BJ (cell line): ENCODE measurements at regions of chr17 and their contacts with region 1.

Region 1: DNA sequence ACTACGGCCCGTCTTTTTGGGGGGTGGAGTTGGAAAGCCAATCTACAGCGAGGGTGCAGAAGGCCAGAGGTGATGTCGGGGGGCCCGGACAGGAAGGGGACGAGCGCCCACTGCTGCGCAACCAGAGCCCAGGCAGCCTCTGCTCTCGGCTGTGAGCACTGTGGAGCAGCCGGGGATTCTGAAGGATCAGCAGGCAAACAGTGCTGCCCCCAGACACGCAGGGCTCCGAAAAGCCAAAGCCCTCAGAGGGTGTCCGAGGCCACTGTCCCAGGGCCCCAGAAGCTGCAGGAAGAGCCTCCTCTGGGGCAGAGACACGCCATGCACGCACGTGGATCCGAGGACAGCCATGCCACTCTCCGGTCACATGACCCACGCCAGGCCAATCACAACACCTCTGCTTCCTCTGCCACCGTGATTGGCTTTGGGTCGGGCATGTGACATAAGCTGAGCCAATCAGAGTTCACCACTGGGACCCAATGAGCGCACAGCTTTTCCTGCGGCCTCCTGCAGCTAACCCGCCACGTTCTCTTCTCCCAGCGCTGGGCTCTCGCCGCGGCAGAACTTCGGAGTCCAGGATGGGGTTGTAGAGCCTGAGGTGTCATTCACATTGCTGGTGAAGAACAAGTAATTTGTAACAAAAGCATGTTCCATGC is 40.7 kb downstream of the ACTG1 start:
- DNase-seq: peak; percentile 76
- H3K4me3 ChIP-seq: peak overlapping the region; percentile 22
- H3K27me3 ChIP-seq: no peaks in the 10 kb centered on the region; the same call in 1 of the 2 replicates
- CTCF ChIP-seq: peak; percentile 77

Region 2: DNA sequence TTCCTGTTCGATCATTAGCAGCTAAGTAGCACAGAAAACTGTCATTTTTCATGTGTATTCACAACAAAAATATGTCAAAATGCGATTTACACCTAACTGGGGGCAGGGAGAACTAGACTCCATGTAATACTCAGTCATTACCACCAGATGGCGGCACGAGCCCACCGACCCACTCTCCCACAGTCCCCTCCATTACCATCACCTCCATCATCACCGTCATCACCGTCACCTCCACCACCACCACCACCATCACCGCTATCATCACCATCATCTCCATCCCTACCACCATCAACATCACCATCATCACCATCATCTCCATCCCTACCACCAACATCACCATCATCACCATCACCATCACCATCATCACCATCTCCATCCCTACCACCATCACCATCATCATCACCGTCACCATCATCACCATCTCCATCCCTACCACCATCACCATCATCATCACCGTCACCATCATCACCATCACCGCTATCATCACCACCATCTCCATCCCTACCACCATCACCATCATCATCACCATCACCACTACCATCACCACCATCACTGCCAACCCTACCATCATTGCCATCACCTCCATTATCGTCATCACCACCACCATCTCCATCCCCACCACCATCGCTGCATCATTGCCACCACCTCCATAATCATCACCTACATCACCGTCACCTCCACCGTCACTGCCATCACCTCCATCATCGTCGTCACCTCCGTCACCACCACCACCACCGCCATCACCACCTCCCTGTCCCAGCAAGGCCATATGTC is 218.4 kb before region 1 on chr17:
- CTCF ChIA-PET with region 1: interaction called, 10 read pairs
- POLR2A ChIA-PET with region 1: no interaction called
- DNase-seq: no peak
- H3K4me3 ChIP-seq: no peak overlapping the region
- H3K27me3 ChIP-seq: no peaks in the 10 kb centered on the region
- CTCF ChIP-seq: peak; percentile 73

Region 3: GRCh38 chr17:81394921-81395599 is 76.9 kb before region 1 on chr17 and contains the start of gene BAHCC1:
- CTCF ChIA-PET with region 1: interaction called, 11 read pairs
- POLR2A ChIA-PET with region 1: no interaction called
- DNase-seq: peak; percentile 97
- H3K4me3 ChIP-seq: peak within 1 kb of the TSS; percentile 61
- H3K27me3 ChIP-seq: no peaks in the 10 kb centered on the region
- CTCF ChIP-seq: no peak
- polyA plus RNA-seq, gene BAHCC1: 2.3 and 3.1 TPM in 2 replicates

Region 4: DNA sequence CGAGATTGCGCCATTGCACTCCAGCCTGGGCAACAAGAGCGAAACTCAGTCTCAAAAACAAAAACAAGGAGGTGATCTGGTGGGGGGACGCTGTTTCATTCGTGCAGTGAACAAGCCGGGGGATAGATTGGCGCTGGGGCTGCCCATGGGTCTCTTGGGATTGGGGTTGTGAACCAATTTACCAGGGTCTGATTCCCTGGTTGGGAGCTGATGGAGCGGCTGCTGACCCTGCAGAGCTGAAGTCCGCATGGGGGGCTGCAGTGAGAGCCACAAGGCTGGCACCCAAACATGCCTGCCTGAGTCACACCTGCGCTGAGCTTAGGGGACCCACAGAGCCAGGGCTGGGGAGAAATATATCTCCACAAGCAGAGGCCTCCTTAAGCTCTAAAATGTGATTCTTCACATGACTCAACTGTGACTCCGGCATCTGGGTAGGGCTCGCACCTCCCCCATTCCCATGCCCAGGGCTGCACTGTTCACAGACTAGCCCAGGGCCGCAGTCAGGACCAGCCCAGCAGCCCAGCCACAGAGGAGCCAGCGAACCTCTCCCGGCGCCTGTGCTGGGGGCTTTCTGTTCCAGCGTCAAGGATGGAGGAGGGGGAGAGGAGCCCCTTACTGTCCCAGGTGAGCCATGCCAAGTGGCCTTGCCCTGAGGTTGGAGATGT is 170.0 kb after region 1 on chr17:
- CTCF ChIA-PET with region 1: no interaction called
- POLR2A ChIA-PET with region 1: no interaction called
- DNase-seq: no peak
- H3K4me3 ChIP-seq: no peak overlapping the region
- H3K27me3 ChIP-seq: no peaks in the 10 kb centered on the region
- CTCF ChIP-seq: no peak